Heart right ventricle (tissue), 16 donors: ENCODE measurements at regions of chr17 and their contacts with region 1.

Region 1: GRCh38 chr17:41548844-41549595 is 20.9 kb upstream of the KRT19 start:
- DNase-seq: peak; percentile 75 to 79
- ATAC-seq: peak; percentile 87 to 95 (median 92)
- H3K4me3 ChIP-seq: peak overlapping the region in 9 of 10 donors; percentile 10 to 39 (median 30)
- H3K27ac ChIP-seq: peak overlapping the region in 2 of 10 donors; percentile 25 to 54
- H3K4me1 ChIP-seq: peaks cover 0 to 22% (median 16%) of the 10 kb centered on the region in 9 donors
- H3K27me3 ChIP-seq: peaks cover 0 to 38% (median 8%) of the 10 kb centered on the region in 7 donors
- CTCF ChIP-seq: peak; percentile 77 to 91 (median 84)

Region 2: GRCh38 chr17:40791787-40792436 is 757.1 kb before region 1 on chr17:
- intact Hi-C with region 1: loop called in 1 of 10 experiments (anchors 5 kb)
- DNase-seq: no peak
- ATAC-seq: peak in 1 of 8 donors; percentile 35
- H3K4me3 ChIP-seq: no peak overlapping the region
- H3K27ac ChIP-seq: no peak overlapping the region
- H3K4me1 ChIP-seq: peaks cover 0 to 6% (median 0%) of the 10 kb centered on the region in 9 donors
- H3K27me3 ChIP-seq: peaks cover 0 to 39% (median 12%) of the 10 kb centered on the region in 7 donors
- CTCF ChIP-seq: peak in 8 of 9 donors; percentile 25 to 68 (median 58)

Region 3: GRCh38 chr17:40803617-40804082 is 745.4 kb before region 1 on chr17:
- intact Hi-C with region 1: loop called in 5 of 10 experiments (anchors 2 to 10 kb)
- DNase-seq: peak; percentile 71 to 74
- ATAC-seq: peak in 7 of 8 donors; percentile 67 to 94 (median 82)
- H3K4me3 ChIP-seq: no peak overlapping the region
- H3K27ac ChIP-seq: no peak overlapping the region
- H3K4me1 ChIP-seq: peaks cover 0 to 8% (median 3%) of the 10 kb centered on the region in 9 donors
- H3K27me3 ChIP-seq: peaks cover 0 to 78% (median 20%) of the 10 kb centered on the region in 7 donors
- CTCF ChIP-seq: peak; percentile 49 to 92 (median 83)

Region 4: GRCh38 chr17:40854159-40854814 is 694.7 kb before region 1 on chr17:
- intact Hi-C with region 1: loop called in 2 of 10 experiments (anchors 2 to 5 kb)
- DNase-seq: no peak
- ATAC-seq: peak in 1 of 8 donors; percentile 62
- H3K4me3 ChIP-seq: no peak overlapping the region
- H3K27ac ChIP-seq: no peak overlapping the region
- H3K4me1 ChIP-seq: peaks cover 0 to 14% (median 0%) of the 10 kb centered on the region in 9 donors
- H3K27me3 ChIP-seq: peaks cover 0 to 16% (median 0%) of the 10 kb centered on the region in 7 donors
- CTCF ChIP-seq: no peak

Region 5: GRCh38 chr17:40915199-40915661 is 633.8 kb before region 1 on chr17:
- intact Hi-C with region 1: loop called in 2 of 10 experiments (anchors 5 to 10 kb)
- DNase-seq: no peak
- ATAC-seq: no peak
- H3K4me3 ChIP-seq: no peak overlapping the region
- H3K27ac ChIP-seq: no peak overlapping the region
- H3K4me1 ChIP-seq: peaks cover 0 to 35% (median 0%) of the 10 kb centered on the region in 9 donors
- H3K27me3 ChIP-seq: peaks cover 0 to 7% (median 0%) of the 10 kb centered on the region in 7 donors
- CTCF ChIP-seq: no peak

Region 6: DNA sequence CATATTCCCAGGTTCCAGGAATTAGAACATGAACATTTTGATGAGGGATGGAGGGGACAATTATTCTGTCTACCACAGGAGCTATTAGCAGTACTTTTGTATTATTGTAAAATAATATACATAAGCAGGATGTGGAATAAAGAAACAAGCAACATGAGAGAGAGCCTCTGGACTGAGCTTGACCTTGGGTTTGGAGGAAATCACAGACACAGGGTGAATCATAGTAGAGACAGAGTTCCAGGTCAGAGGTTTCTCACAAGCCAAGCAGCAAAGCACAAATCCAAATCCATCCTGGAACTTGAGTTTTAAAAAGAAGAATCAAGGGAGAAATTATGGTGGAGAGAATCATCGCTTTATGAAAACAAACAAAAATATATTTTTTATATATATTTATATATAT is 156.7 kb before region 1 on chr17:
- intact Hi-C with region 1: no loop called
- DNase-seq: no peak
- ATAC-seq: no peak
- H3K4me3 ChIP-seq: no peak overlapping the region
- H3K27ac ChIP-seq: no peak overlapping the region
- H3K4me1 ChIP-seq: peaks cover 0 to 16% (median 12%) of the 10 kb centered on the region in 9 donors
- H3K27me3 ChIP-seq: peaks cover 0 to 16% (median 0%) of the 10 kb centered on the region in 7 donors
- CTCF ChIP-seq: no peak

Region 7: GRCh38 chr17:41835800-41836549 is 287.0 kb after region 1 on chr17 and contains the start of gene NT5C3B:
- intact Hi-C with region 1: no loop called
- DNase-seq: peak; percentile 34 to 71
- ATAC-seq: peak; percentile 90 to 97 (median 92)
- H3K4me3 ChIP-seq: peak within 1 kb of the TSS; percentile 70 to 100 (median 90)
- H3K27ac ChIP-seq: peak within 1 kb of the TSS in 9 of 10 donors; percentile 60 to 84 (median 75)
- H3K4me1 ChIP-seq: peaks cover 0 to 20% (median 14%) of the 10 kb centered on the region in 9 donors
- H3K27me3 ChIP-seq: no peaks in the 10 kb centered on the region
- CTCF ChIP-seq: no peak
- total RNA-seq, gene NT5C3B: 14.5 to 25.0 (median 20.5) TPM